Colonic mucosa (tissue), 4 donors: ENCODE measurements at regions of chr7 and their contacts with region 1.

Region 1: DNA sequence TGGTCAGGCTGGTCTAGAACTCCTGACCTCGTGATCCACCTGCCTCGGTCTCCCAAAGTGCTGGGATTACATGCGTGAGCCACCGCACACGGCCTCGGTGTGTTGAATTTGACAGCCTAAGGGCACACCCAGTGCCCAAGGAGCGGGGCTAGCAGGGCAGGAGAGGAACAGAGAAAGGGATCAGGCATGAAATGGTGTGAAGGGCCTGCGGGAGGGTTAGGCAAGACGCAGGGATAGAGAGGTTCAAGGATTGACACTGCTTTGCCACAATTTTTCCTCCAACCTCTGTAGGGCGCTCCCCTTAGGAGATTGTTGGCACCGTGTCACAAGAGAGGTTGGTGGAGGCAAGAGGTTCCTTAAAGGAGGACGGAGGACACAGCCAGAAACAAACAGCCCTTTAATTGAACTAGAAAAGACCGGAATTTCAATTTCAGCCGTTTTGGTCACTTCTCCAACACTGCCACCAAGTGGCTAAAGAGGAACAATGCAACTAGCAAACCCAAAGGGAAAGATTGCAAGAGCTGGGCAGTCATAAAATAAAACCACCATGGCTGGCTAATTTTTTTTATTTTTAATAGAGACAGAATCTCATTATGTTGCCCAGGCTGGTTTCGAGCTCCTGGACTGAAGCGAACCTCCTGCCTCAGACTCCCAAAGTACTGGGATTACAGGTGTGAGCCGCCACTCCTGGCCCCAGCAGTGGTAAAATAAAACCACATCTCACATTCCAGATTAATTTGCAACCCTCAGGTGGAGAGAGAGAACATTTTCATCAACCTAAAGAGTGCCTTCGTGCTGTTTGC is 6.9 kb upstream of the CREB3L2 start:
- DNase-seq: peak; percentile 38
- H3K4me3 ChIP-seq: no peak overlapping the region
- H3K27ac ChIP-seq: no peak overlapping the region
- H3K4me1 ChIP-seq: no peaks in the 10 kb centered on the region
- H3K27me3 ChIP-seq: no peaks in the 10 kb centered on the region
- CTCF ChIP-seq: peak; percentile 83

Region 2: DNA sequence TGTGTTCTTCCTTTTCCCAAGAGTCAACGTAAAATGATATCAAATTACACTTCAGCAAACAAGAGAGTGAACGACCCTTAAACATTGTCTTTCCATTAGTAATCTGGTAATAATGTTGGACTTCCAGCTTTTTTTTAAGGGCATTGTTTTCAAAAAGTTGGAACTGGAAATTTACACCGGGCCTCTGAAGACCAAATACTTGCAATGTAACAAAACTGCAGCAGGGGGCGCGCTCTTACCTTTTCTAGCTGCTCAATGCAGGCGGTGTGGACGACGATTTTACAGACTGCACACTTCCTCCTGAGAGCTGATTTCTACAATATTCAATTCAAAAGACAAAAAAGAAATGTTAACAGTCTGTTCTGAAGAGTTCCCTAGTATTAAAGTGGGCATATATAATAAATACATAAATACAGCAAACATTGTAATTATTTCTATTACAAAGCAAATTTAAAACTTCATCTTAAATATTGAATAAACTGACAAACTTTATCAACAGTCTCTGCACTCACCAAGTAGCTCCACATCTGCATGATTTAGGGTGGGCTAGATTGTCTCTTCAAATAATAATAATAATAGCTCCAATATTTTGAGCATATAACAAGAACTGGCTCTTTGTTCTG is 352.4 kb before region 1 on chr7:
- intact Hi-C with region 1: loop called (anchors 5 kb)
- DNase-seq: peak; percentile 81
- H3K4me3 ChIP-seq: no peak overlapping the region
- H3K27ac ChIP-seq: no peak overlapping the region
- H3K4me1 ChIP-seq: no peaks in the 10 kb centered on the region
- H3K27me3 ChIP-seq: no peaks in the 10 kb centered on the region
- CTCF ChIP-seq: peak; percentile 81

Region 3: GRCh38 chr7:137801003-137801402 is 207.7 kb before region 1 on chr7:
- intact Hi-C with region 1: no loop called
- DNase-seq: no peak
- H3K4me3 ChIP-seq: no peak overlapping the region
- H3K27ac ChIP-seq: no peak overlapping the region
- H3K4me1 ChIP-seq: no peaks in the 10 kb centered on the region
- H3K27me3 ChIP-seq: no peaks in the 10 kb centered on the region
- CTCF ChIP-seq: no peak

Region 4: GRCh38 chr7:138625849-138626230 is 617.1 kb after region 1 on chr7:
- intact Hi-C with region 1: no loop called
- DNase-seq: no peak
- H3K4me3 ChIP-seq: no peak overlapping the region
- H3K27ac ChIP-seq: no peak overlapping the region
- H3K4me1 ChIP-seq: no peaks in the 10 kb centered on the region
- H3K27me3 ChIP-seq: no peaks in the 10 kb centered on the region
- CTCF ChIP-seq: no peak